ENCODE measurements at regions of chr14 and their contacts with region 1.

Region 1: DNA sequence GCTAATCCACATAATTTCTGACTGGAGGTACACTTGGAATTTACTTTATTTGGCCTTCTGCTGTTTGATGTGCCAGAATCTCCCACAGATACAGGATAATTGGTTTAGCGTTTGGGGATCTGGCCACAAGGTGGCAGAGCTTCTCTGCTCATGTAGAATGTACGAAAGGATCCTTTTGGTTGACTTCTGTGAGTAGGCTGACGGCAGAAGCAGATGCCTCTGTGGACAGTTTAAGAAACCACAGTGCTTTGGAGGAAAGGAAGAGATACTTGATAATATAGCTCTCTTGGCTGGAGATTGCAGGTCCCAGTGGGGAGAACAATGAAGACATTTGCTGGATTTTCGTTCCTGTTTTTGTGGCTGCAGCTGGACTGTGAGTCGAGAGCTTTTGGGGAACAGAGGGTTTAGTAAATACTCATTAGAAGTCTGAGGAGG is 75.3 kb upstream of the OR4E1 start:
- DNase-seq: no peak
- ATAC-seq: peak; percentile 86
- H3K4me3 ChIP-seq: no peak overlapping the region
- H3K27ac ChIP-seq: no peak overlapping the region
- H3K4me1 ChIP-seq: no peaks in the 10 kb centered on the region
- H3K27me3 ChIP-seq: no peaks in the 10 kb centered on the region; a peak in 1 of 4 replicates
- CTCF ChIP-seq: peak; percentile 57 to 75 (median 71)
- EP300 ChIP-seq: no peak
- POLR2A ChIP-seq: no peak
- RAD21 ChIP-seq: 0 out of 2 replicates have a peak, but pooled peaks have one; percentile 22

Region 2: DNA sequence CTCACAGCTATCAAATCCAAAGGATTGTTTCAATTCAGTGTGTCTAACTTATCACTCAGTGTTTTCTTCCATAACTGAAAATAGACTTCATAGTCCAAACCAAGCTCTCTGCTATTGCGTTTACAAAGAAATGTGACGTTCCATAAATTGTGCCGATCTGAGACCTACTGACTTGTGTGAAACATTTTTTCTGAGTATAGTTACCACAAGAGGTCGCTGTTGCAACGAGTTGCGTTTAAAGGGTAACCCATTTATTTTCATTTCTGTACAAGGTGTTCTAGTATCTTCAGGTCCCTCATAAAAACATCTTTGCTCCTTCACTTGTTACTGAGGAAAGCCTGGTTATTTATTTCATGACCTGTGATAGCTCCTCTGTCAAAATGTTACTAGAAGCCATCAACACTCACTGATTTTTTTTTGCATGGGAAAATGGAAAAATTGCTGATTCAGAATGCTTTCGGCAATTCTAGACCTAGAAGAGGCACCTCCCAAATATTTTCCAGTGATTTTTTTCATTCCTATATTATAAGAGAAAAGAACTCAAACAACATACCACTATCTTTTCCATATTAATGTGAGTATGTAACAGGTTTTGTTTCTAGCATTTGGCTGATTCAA is 14.3 kb before region 1 on chr14:
- CTCF ChIA-PET with region 1: interaction called, 10 read pairs
- POLR2A ChIA-PET with region 1: no interaction called
- RAD21 ChIA-PET with region 1: no interaction called
- SMC1A ChIA-PET with region 1: no interaction called
- in situ Hi-C with region 1: no loop called
- intact Hi-C with region 1: no loop called
- DNase-seq: peak; percentile 12
- ATAC-seq: peak; percentile 64
- H3K4me3 ChIP-seq: no peak overlapping the region
- H3K27ac ChIP-seq: no peak overlapping the region
- H3K4me1 ChIP-seq: no peaks in the 10 kb centered on the region
- H3K27me3 ChIP-seq: no peaks in the 10 kb centered on the region
- CTCF ChIP-seq: peak; percentile 54 to 65 (median 58)
- EP300 ChIP-seq: no peak
- POLR2A ChIP-seq: no peak
- RAD21 ChIP-seq: 0 out of 2 replicates have a peak, but pooled peaks have one; percentile 7

Region 3: GRCh38 chr14:21796916-21797315 is 48.0 kb after region 1 on chr14:
- CTCF ChIA-PET with region 1: no interaction called
- POLR2A ChIA-PET with region 1: no interaction called
- RAD21 ChIA-PET with region 1: no interaction called
- SMC1A ChIA-PET with region 1: no interaction called
- in situ Hi-C with region 1: no loop called
- intact Hi-C with region 1: no loop called
- DNase-seq: no peak
- ATAC-seq: no peak
- H3K4me3 ChIP-seq: no peak overlapping the region
- H3K27ac ChIP-seq: no peak overlapping the region
- H3K4me1 ChIP-seq: no peaks in the 10 kb centered on the region
- H3K27me3 ChIP-seq: no peaks in the 10 kb centered on the region
- CTCF ChIP-seq: no peak
- EP300 ChIP-seq: no peak
- POLR2A ChIP-seq: no peak
- RAD21 ChIP-seq: no peak

Measured in GM12878 (cell line).